CD4-positive, alpha-beta memory T cell (primary cell): ENCODE measurements at regions of chr14 and their contacts with region 1.

Region 1: GRCh38 chr14:64387694-64388532 is at the start of gene MTHFD1:
- DNase-seq: peak; percentile 95 to 97 (median 96)
- H3K4me3 ChIP-seq: peak within 1 kb of the TSS; percentile 68 to 83
- H3K4me3 Mint-ChIP-seq: peak within 1 kb of the TSS; percentile 94 to 99 (median 96)
- H3K27ac ChIP-seq: peak within 1 kb of the TSS; percentile 60
- H3K27ac Mint-ChIP-seq: peak within 1 kb of the TSS; percentile 91 to 99 (median 97)
- H3K4me1 ChIP-seq: peaks cover 36% of the 10 kb centered on the region
- H3K4me1 Mint-ChIP-seq: peaks cover 17 to 51% (median 29%) of the 10 kb centered on the region in 4 donors
- H3K27me3 ChIP-seq: no peaks in the 10 kb centered on the region
- H3K27me3 Mint-ChIP-seq: no peaks in the 10 kb centered on the region
- total RNA-seq, gene MTHFD1: 27.9 to 29.8 TPM

Region 2: GRCh38 chr14:63641473-63642228 is 746.3 kb before region 1 on chr14 and contains the start of gene WDR89:
- CTCF ChIA-PET with region 1: no interaction called
- POLR2A ChIA-PET with region 1: no interaction called
- intact Hi-C with region 1: loop called (anchors 5 kb)
- DNase-seq: peak; percentile 96 to 99 (median 98)
- H3K4me3 ChIP-seq: peak within 1 kb of the TSS; percentile 85 to 96
- H3K4me3 Mint-ChIP-seq: peak within 1 kb of the TSS; percentile 85 to 98 (median 92)
- H3K27ac ChIP-seq: peak within 1 kb of the TSS; percentile 99
- H3K27ac Mint-ChIP-seq: peak within 1 kb of the TSS; percentile 90 to 99 (median 97)
- H3K4me1 ChIP-seq: peaks cover 37% of the 10 kb centered on the region
- H3K4me1 Mint-ChIP-seq: peaks cover 22 to 49% (median 33%) of the 10 kb centered on the region in 4 donors
- H3K27me3 ChIP-seq: no peaks in the 10 kb centered on the region
- H3K27me3 Mint-ChIP-seq: no peaks in the 10 kb centered on the region
- total RNA-seq, gene WDR89: 32.8 to 36.3 TPM

Region 3: GRCh38 chr14:63960926-63961567 is 426.9 kb before region 1 on chr14:
- CTCF ChIA-PET with region 1: no interaction called
- POLR2A ChIA-PET with region 1: no interaction called
- intact Hi-C with region 1: no loop called
- DNase-seq: no peak
- H3K4me3 ChIP-seq: no peak overlapping the region
- H3K4me3 Mint-ChIP-seq: no peak overlapping the region
- H3K27ac ChIP-seq: no peak overlapping the region
- H3K27ac Mint-ChIP-seq: peak overlapping the region in 1 of 7 donors; percentile 64
- H3K4me1 ChIP-seq: no peaks in the 10 kb centered on the region
- H3K4me1 Mint-ChIP-seq: no peaks in the 10 kb centered on the region
- H3K27me3 ChIP-seq: no peaks in the 10 kb centered on the region
- H3K27me3 Mint-ChIP-seq: no peaks in the 10 kb centered on the region

Region 4: GRCh38 chr14:64338616-64339316 is 49.1 kb before region 1 on chr14:
- CTCF ChIA-PET with region 1: no interaction called
- POLR2A ChIA-PET with region 1: interaction called, 15 read pairs
- intact Hi-C with region 1: loop called (anchors 1 kb)
- DNase-seq: peak; percentile 84 to 91 (median 85)
- H3K4me3 ChIP-seq: peak overlapping the region; percentile 36 to 77
- H3K4me3 Mint-ChIP-seq: peak overlapping the region; percentile 93 to 99 (median 95)
- H3K27ac ChIP-seq: peak overlapping the region; percentile 34
- H3K27ac Mint-ChIP-seq: peak overlapping the region; percentile 83 to 97 (median 95)
- H3K4me1 ChIP-seq: peaks cover 17% of the 10 kb centered on the region
- H3K4me1 Mint-ChIP-seq: peaks cover 12 to 27% (median 21%) of the 10 kb centered on the region in 4 donors
- H3K27me3 ChIP-seq: no peaks in the 10 kb centered on the region
- H3K27me3 Mint-ChIP-seq: no peaks in the 10 kb centered on the region

Region 5: DNA sequence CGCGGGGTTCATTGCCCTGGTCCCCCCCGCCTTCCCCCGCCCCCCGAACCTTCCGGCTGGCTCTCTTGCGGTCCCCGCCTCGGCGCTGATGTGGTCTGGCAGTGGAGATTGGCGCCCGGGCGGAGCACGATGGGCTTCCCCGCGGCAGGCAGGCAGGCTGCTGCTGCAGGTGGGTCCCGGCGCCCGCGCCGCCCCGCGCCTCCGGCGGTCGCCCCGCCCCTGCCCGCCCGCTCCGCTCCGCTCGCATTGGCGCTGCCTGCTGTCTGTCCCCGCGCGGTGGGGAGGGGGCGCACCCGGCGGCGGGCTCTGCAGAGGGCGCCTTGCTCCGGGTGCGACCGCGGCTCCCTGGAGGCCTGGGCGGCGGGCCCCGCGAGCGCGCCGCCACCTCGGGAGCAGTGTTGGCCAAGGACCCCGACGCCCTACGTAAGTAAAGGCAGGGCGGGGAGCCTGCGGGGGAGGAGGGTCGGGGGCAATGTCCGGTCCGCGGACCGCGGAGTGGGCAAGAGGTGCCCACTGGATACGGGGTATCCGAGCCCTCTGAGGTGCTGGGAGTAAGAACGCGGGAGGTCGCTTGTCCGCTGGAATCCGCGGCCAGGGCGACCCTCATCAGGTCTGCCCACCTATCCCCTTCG is 77.4 kb after region 1 on chr14 and contains the start of gene AKAP5:
- CTCF ChIA-PET with region 1: no interaction called
- POLR2A ChIA-PET with region 1: interaction called, 3 read pairs
- intact Hi-C with region 1: loop called (anchors 5 kb)
- DNase-seq: peak; percentile 62 to 72 (median 64)
- H3K4me3 ChIP-seq: peak within 1 kb of the TSS; percentile 38 to 57
- H3K4me3 Mint-ChIP-seq: peak within 1 kb of the TSS; percentile 82 to 95 (median 90)
- H3K27ac ChIP-seq: peak within 1 kb of the TSS; percentile 29
- H3K27ac Mint-ChIP-seq: peak within 1 kb of the TSS; percentile 71 to 89 (median 78)
- H3K4me1 ChIP-seq: peaks cover 36% of the 10 kb centered on the region
- H3K4me1 Mint-ChIP-seq: peaks cover 25 to 45% (median 33%) of the 10 kb centered on the region in 4 donors
- H3K27me3 ChIP-seq: no peaks in the 10 kb centered on the region
- H3K27me3 Mint-ChIP-seq: no peaks in the 10 kb centered on the region
- total RNA-seq, gene AKAP5: 0.14 to 0.20 TPM

Region 6: GRCh38 chr14:65102441-65103149 is 714.7 kb after region 1 on chr14 and contains the start of gene MAX:
- CTCF ChIA-PET with region 1: no interaction called
- POLR2A ChIA-PET with region 1: no interaction called
- intact Hi-C with region 1: loop called (anchors 5 kb)
- DNase-seq: peak; percentile 98 to 100 (median 100)
- H3K4me3 ChIP-seq: peak within 1 kb of the TSS; percentile 77 to 100
- H3K4me3 Mint-ChIP-seq: peak within 1 kb of the TSS; percentile 91 to 100 (median 96)
- H3K27ac ChIP-seq: peak within 1 kb of the TSS; percentile 96
- H3K27ac Mint-ChIP-seq: peak within 1 kb of the TSS; percentile 92 to 99 (median 97)
- H3K4me1 ChIP-seq: peaks cover 41% of the 10 kb centered on the region
- H3K4me1 Mint-ChIP-seq: peaks cover 24 to 49% (median 35%) of the 10 kb centered on the region in 4 donors
- H3K27me3 ChIP-seq: no peaks in the 10 kb centered on the region
- H3K27me3 Mint-ChIP-seq: peaks cover 2 to 3% of the 10 kb centered on the region in 2 donors
- total RNA-seq, gene MAX: 188 to 212 TPM